WTC11 (cell line): ENCODE measurements at regions of chr2 and their contacts with region 1.

Region 1: GRCh38 chr2:216081487-216082116 is at the starts of genes PECR and TMEM169:
- DNase-seq: peak; percentile 89
- ATAC-seq: peak; percentile 93
- H3K4me3 Mint-ChIP-seq: peak within 1 kb of the TSS; percentile 93
- H3K27ac Mint-ChIP-seq: peak within 1 kb of the TSS; percentile 94
- H3K4me1 Mint-ChIP-seq: peaks cover 41% of the 10 kb centered on the region
- H3K27me3 Mint-ChIP-seq: no peaks in the 10 kb centered on the region
- CTCF ChIP-seq: no peak
- total RNA-seq, gene PECR: 13.9 to 21.3 TPM (median 19.6 TPM) in 3 replicates
- total RNA-seq, gene TMEM169: 1.8 to 3.5 TPM (median 3.3 TPM) in 3 replicates

Region 2: DNA sequence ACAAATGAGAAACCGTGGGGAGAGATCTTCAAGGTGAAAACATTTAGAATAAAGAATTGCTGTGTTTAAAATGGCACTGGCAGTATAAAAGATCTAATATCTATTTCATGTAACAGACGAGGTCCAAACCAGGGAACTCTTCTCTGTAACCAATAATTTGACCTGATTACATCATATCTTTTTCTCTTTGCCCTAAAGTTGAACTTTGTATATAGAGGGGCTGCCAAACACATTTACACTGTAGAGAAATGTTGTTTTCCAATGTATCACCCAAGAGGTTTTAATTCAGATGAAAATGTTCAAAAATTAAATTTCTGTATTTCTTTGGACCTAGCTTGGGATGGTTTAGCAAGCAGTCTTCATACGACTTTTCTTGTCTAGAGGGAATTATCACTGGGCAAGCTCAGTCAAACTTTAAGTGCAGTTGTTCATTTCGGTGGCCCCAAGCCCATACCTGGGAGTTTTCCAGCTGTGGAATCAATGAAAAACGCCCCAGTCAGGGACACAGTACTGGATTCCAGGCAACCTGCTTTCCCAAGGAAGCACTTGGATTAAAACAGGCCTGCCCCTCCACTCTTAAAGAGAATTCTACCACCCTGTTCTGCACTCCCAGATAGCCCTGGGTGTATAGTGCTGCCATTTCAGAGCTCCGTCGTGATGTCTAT is 437.2 kb before region 1 on chr2:
- CTCF ChIA-PET with region 1: no interaction called
- POLR2A ChIA-PET with region 1: no interaction called
- DNase-seq: no peak
- ATAC-seq: no peak
- H3K4me3 Mint-ChIP-seq: no peak overlapping the region
- H3K27ac Mint-ChIP-seq: no peak overlapping the region
- H3K4me1 Mint-ChIP-seq: peaks cover 3% of the 10 kb centered on the region; the same call in 1 of the 2 replicates
- H3K27me3 Mint-ChIP-seq: no peaks in the 10 kb centered on the region
- CTCF ChIP-seq: no peak

Region 3: DNA sequence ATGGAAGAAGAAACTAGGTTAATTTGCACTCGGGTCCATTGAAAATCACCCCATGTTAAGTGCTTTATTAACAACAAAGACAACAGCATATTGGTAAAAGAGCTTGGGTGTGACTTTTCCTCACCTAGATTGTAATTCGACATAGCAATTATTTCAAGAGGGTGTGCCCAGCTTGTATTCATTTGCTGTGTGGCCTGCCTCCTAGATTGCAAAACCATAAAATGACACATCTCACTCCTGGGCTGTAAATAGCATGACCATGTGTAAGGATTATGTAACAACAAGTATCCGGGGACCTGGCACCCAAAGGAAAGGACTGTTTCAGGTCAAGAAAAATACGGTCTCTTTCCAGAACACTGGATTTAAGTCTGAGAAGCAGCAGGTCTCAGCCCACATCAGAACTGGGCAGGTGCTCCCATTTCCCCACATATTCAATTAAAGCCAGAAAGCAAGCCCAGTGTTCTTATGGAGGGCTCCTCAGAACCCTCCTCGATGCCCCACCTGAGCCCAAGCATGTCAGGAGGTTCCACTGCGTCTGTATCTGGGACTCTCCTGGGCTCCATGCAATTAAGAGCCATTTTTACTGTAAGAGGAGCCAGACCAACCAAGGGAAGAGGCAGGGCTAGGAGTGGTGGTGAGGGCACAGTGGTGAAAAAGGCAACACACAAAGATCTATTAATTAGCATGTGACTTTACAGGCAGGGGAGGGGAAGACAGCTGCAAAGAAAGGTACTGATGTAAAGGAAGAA is 107.5 kb before region 1 on chr2:
- CTCF ChIA-PET with region 1: no interaction called
- POLR2A ChIA-PET with region 1: no interaction called
- DNase-seq: no peak
- ATAC-seq: peak; percentile 69
- H3K4me3 Mint-ChIP-seq: no peak overlapping the region
- H3K27ac Mint-ChIP-seq: peak overlapping the region; percentile 65
- H3K4me1 Mint-ChIP-seq: peaks cover 26% of the 10 kb centered on the region
- H3K27me3 Mint-ChIP-seq: no peaks in the 10 kb centered on the region
- CTCF ChIP-seq: no peak

Region 4: GRCh38 chr2:216034065-216034464 is 47.5 kb before region 1 on chr2:
- CTCF ChIA-PET with region 1: interaction called, 11 read pairs
- POLR2A ChIA-PET with region 1: no interaction called
- DNase-seq: peak; percentile 85
- ATAC-seq: peak; percentile 78
- H3K4me3 Mint-ChIP-seq: no peak overlapping the region
- H3K27ac Mint-ChIP-seq: no peak overlapping the region
- H3K4me1 Mint-ChIP-seq: no peaks in the 10 kb centered on the region
- H3K27me3 Mint-ChIP-seq: no peaks in the 10 kb centered on the region
- CTCF ChIP-seq: peak; percentile 94

Region 5: GRCh38 chr2:216108967-216109921 is 27.6 kb after region 1 on chr2 and contains the start of gene XRCC5:
- CTCF ChIA-PET with region 1: interaction called, 26 read pairs
- POLR2A ChIA-PET with region 1: interaction called, 46 read pairs
- DNase-seq: peak; percentile 97
- ATAC-seq: peak; percentile 71
- H3K4me3 Mint-ChIP-seq: peak within 1 kb of the TSS; percentile 100
- H3K27ac Mint-ChIP-seq: peak within 1 kb of the TSS; percentile 99
- H3K4me1 Mint-ChIP-seq: peaks cover 49% of the 10 kb centered on the region
- H3K27me3 Mint-ChIP-seq: no peaks in the 10 kb centered on the region; the same call in 1 of the 2 replicates
- CTCF ChIP-seq: no peak
- total RNA-seq, gene XRCC5: 459 to 522 TPM (median 466 TPM) in 3 replicates

Region 6: DNA sequence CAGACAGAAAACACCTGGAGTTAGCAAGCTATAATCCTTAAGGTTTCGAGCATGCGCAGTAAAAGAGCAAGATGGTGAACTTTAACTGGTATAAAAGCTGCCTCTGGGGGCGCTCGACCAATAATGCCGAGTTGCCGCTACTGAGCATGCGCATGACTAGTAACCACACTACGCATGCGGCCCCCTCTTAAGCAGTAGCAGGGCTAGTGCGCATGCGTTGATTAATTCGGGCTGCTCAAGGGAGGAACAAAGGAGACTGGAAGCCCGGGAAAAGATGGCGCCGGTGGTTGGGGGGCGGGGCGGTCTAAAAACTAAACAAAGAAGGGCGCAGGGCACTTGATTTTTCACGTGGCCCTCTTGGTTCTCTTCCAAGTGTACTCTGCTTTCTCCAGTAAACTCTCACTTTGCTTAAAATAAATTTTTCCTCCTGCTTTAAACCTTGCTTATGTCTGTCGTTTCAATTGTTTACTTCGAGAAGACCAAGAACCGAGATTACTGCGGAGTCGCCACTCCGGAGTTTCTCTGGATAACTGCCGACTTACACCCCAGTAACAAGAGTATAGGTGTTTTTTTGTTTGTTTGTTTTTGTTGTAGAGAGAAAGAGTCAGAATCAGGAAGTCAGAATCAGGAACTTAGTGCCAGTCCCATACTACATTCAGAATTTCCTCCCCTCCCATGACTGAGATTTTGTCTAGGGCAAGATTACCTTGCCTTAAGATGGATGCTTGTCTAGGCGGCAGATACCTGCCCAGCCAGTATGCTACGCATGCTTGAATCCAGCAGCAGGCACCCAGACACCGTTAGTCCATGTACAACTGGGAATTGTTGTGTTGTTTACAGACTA is 33.3 kb after region 1 on chr2:
- CTCF ChIA-PET with region 1: interaction called, 26 read pairs
- POLR2A ChIA-PET with region 1: interaction called, 46 read pairs
- DNase-seq: peak; percentile 98
- ATAC-seq: peak; percentile 91
- H3K4me3 Mint-ChIP-seq: peak overlapping the region; percentile 77
- H3K27ac Mint-ChIP-seq: peak overlapping the region; percentile 98
- H3K4me1 Mint-ChIP-seq: peaks cover 47% of the 10 kb centered on the region
- H3K27me3 Mint-ChIP-seq: no peaks in the 10 kb centered on the region
- CTCF ChIP-seq: peak; percentile 89